ENCODE measurements at regions of chr1 and their contacts with region 1.

Region 1: GRCh38 chr1:155961937-155962336 is 16.4 kb downstream of the ARHGEF2 start:
- DNase-seq: peak; percentile 91
- H3K4me3 ChIP-seq: no peak overlapping the region
- H3K27ac ChIP-seq: peak overlapping the region; percentile 86
- H3K4me1 ChIP-seq: peaks cover 22% of the 10 kb centered on the region
- H3K27me3 ChIP-seq: no peaks in the 10 kb centered on the region
- CTCF ChIP-seq: peak; percentile 44 to 61
- POLR2A ChIP-seq: peak; percentile 7

Region 2: DNA sequence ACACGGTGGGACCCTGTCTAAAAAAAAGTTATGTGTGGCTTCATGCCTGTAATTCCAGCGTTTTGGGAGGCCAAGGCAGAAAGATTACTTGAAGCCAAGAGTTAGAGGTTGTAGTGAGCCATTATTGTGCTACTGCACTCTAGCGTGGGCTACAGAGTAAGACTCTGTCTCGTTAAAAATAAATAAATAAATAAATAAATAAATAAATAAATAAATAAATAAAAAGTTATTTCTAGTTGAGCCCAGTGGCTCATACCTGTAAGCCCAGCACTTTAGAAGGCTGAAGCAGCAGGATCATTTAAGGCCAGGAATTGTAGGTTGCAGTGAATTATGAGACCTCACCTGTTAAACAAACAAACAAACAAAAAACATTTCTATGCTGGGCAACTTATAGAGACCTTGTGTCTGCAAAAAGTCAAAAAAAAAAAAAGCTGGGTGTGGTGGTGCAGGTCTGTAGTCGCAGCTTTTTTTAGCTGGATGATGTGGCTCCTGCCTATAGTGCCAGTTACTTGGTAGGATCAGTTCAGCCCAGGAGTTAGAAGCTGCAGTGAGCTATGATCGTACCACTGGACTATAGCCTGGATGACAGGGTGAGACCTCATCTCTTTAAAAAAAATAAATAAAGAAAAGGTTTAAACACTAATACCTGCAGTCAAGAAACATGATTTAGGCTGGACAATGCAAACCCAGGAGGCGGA is 130.5 kb before region 1 on chr1:
- CTCF ChIA-PET with region 1: no interaction called
- POLR2A ChIA-PET with region 1: no interaction called
- dilution Hi-C with region 1: no loop called
- intact Hi-C with region 1: no loop called
- DNase-seq: no peak
- H3K4me3 ChIP-seq: no peak overlapping the region
- H3K27ac ChIP-seq: no peak overlapping the region
- H3K4me1 ChIP-seq: no peaks in the 10 kb centered on the region
- H3K27me3 ChIP-seq: no peaks in the 10 kb centered on the region
- CTCF ChIP-seq: no peak
- POLR2A ChIP-seq: no peak

Region 3: GRCh38 chr1:155940531-155940992 is 21.4 kb before region 1 on chr1:
- CTCF ChIA-PET with region 1: interaction called, 16 read pairs
- POLR2A ChIA-PET with region 1: interaction called, 9 read pairs
- dilution Hi-C with region 1: no loop called
- intact Hi-C with region 1: loop called (anchors 1 kb)
- DNase-seq: peak; percentile 84
- H3K4me3 ChIP-seq: peak overlapping the region in 1 of 3 experiments; percentile 21
- H3K27ac ChIP-seq: peak overlapping the region; percentile 90
- H3K4me1 ChIP-seq: peaks cover 28% of the 10 kb centered on the region
- H3K27me3 ChIP-seq: no peaks in the 10 kb centered on the region
- CTCF ChIP-seq: no peak
- POLR2A ChIP-seq: peak; percentile 87

Measured in endothelial cell of umbilical vein (primary cell).